CD4-positive, alpha-beta memory T cell (primary cell): ENCODE measurements at regions of chr7 and their contacts with region 1.

Region 1: DNA sequence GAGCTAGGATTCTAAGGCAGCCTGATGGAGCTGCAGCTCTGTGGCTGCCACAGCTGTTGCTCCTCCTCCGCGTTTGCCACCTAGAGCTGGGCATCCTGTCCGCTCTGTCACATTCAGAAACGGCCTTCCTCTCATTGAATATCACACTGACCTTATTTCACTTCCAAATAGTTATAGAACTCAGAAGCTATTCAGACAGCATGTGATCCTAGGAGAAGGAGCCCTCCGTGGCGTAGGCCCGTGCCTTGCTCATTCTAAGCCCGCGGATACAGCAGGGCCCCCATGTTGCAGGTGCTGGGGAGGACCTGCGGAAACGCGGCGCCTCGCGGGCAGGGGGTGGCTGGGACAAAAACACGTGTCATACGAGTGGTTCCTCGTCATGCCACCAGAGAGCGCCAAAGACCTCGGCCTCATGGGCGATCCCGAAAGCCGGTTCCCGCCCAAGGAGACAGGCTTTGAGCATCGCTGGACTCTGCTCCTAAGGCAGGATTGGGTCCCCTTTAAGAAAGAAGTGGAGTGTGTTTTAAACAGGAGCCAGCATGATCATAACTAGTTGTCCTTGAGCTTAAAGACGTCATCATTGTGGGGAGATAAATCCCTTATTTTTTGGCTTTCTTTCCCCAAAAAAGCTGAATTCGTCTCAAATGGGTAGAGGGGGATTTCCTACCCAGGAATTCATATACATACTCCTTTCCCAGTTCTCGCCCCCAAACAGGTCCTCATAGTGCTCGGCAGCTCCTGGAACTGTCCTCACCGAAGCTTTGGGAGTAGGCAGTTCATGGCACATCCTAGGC is 17.9 kb upstream of the FIGNL1 start:
- DNase-seq: peak; percentile 72 to 78 (median 74)
- H3K4me3 ChIP-seq: peak overlapping the region in 1 of 2 donors; percentile 6
- H3K4me3 Mint-ChIP-seq: peak overlapping the region; percentile 18 to 79 (median 64)
- H3K27ac ChIP-seq: no peak overlapping the region
- H3K27ac Mint-ChIP-seq: peak overlapping the region in 5 of 7 donors; percentile 55 to 88 (median 81)
- H3K4me1 ChIP-seq: peaks cover 10% of the 10 kb centered on the region
- H3K4me1 Mint-ChIP-seq: peaks cover 2 to 14% (median 9%) of the 10 kb centered on the region in 4 donors
- H3K27me3 ChIP-seq: no peaks in the 10 kb centered on the region
- H3K27me3 Mint-ChIP-seq: peaks cover 0 to 3% of the 10 kb centered on the region in 2 donors

Region 2: DNA sequence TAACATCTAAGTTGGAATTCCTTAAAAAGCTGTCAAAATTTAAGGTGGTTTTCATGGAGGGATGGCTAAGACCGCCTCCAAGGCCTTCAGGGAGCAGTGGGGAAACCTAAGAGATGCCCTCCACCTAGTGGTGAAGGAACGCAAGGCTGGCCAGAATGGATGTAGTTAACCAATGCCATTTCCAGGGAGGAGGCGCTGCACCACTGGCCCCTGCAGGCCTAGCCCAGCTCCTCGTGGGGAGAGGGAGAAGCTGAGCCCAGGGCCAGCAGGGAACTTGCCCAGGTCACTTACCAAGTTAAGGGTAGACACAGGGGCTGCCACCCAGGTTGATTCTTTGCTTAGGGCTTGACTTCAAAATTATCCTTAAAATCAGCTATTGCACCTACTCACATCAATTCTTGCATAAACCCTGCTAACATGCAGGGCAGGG is 49.9 kb before region 1 on chr7:
- CTCF ChIA-PET with region 1: interaction called, 13 read pairs
- POLR2A ChIA-PET with region 1: no interaction called
- intact Hi-C with region 1: no loop called
- DNase-seq: peak; percentile 59 to 71 (median 63)
- H3K4me3 ChIP-seq: no peak overlapping the region
- H3K4me3 Mint-ChIP-seq: no peak overlapping the region
- H3K27ac ChIP-seq: no peak overlapping the region
- H3K27ac Mint-ChIP-seq: peak overlapping the region in 1 of 7 donors; percentile 62
- H3K4me1 ChIP-seq: peaks cover 16% of the 10 kb centered on the region
- H3K4me1 Mint-ChIP-seq: peaks cover 12 to 23% (median 16%) of the 10 kb centered on the region in 4 donors
- H3K27me3 ChIP-seq: no peaks in the 10 kb centered on the region
- H3K27me3 Mint-ChIP-seq: no peaks in the 10 kb centered on the region

Region 3: DNA sequence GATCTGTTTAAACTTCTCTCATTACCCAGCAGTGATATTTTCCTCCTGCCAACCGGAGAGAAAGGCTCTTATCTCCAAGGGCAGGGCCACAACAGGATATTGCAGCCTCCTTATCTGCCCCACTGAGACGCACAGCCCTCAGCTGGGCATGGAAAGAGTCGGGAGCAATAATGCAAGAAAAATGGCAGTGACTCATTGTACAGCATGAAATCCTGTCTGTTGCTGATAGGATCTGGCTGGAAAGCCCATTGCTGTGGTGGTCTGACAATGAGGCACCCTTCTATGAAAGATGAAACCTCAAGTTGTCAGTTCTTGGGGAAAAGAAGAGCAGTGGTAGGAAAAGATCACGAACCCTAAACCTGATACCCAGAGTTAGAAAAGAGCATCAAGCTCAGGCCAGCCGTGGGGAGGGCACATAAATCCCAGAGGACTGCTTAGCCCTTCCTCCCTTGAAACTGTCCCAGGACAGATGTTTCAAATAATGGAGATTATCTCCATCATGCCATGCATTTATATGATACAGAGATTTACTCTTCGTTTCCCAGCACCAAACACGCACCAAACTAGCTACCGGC is 29.1 kb after region 1 on chr7:
- CTCF ChIA-PET with region 1: interaction called, 10 read pairs
- POLR2A ChIA-PET with region 1: no interaction called
- intact Hi-C with region 1: no loop called
- DNase-seq: no peak
- H3K4me3 ChIP-seq: no peak overlapping the region
- H3K4me3 Mint-ChIP-seq: no peak overlapping the region
- H3K27ac ChIP-seq: no peak overlapping the region
- H3K27ac Mint-ChIP-seq: no peak overlapping the region
- H3K4me1 ChIP-seq: no peaks in the 10 kb centered on the region
- H3K4me1 Mint-ChIP-seq: no peaks in the 10 kb centered on the region
- H3K27me3 ChIP-seq: no peaks in the 10 kb centered on the region
- H3K27me3 Mint-ChIP-seq: peaks cover 10 to 19% of the 10 kb centered on the region in 2 donors

Region 4: DNA sequence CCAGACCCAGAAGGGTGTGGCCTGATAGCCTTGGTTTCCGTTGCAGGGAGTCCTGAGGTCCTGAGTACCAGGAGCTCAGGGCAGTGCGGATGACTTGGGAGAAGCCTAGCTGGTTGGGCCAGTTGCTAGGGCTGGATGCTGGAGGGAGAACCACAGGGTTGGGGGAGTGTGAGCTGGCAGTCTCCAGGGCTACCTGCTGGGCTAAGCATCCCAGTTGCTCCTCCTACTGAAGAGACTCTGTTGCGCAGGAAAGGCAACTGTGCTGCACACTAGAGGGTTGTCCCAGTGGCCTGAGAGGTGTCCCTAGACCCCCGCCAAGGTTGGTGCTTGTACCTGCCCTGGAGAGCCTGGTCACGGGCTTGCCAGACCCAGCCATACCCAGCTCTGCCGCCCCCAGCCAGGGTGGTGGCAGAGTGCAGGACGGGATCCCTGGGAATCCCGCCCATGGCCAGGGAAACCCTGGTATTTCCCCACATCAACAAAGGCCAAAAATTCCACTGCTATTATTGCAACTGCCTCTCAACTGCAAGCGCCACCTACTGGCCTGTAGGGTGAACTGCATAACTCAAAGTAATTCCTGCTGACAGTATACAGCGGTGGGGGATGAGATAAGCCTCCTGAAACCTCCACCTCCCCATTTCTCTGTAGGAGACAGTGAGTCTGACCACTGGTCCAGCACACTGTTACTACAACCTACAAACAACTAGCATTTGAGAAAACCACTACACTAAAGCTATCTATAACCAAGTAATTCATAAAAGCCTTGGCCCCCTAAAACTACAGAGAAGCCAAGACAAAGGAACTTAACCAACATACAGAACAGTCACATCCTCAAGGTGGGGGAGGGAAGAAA is 164.8 kb after region 1 on chr7:
- CTCF ChIA-PET with region 1: interaction called, 135 read pairs
- POLR2A ChIA-PET with region 1: interaction called, 3 read pairs
- intact Hi-C with region 1: loop called (anchors 1 kb)
- DNase-seq: peak; percentile 57 to 62 (median 60)
- H3K4me3 ChIP-seq: no peak overlapping the region
- H3K4me3 Mint-ChIP-seq: no peak overlapping the region
- H3K27ac ChIP-seq: no peak overlapping the region
- H3K27ac Mint-ChIP-seq: peak overlapping the region in 1 of 7 donors; percentile 15
- H3K4me1 ChIP-seq: no peaks in the 10 kb centered on the region
- H3K4me1 Mint-ChIP-seq: peaks cover 3 to 6% (median 5%) of the 10 kb centered on the region in 4 donors
- H3K27me3 ChIP-seq: no peaks in the 10 kb centered on the region
- H3K27me3 Mint-ChIP-seq: peaks cover 3 to 5% of the 10 kb centered on the region in 2 donors

Region 5: DNA sequence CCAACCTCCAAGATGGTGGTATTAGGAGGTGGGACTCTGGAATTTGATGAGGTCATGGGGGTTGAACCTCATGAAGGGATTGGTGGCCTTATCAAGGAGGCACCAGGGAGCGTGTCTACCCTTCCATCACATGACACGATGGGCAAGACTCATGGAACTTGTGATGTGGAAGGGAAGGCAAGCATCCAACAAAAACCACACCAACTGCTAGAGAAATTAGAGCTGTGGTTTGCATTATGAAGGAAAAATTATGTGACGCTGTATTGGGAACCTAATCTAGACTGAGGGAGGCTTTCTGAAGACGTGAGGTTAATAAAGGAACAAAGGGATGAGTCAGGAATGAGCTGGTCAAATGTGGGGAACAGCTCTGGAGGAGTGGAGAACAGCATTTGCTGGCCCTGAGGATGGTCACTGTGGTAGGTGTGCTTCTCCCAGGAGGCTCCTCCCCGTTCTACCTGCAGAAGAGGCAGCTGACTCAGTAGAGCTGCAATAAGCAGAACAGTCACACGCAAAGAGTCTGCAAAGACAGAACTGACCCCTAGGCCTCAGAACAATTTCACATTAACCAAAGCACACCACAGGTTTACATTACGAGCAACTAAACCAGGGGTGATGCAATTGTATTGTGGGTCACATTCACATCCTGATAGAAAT is 551.3 kb after region 1 on chr7:
- CTCF ChIA-PET with region 1: no interaction called
- POLR2A ChIA-PET with region 1: no interaction called
- intact Hi-C with region 1: no loop called
- DNase-seq: no peak
- H3K4me3 ChIP-seq: no peak overlapping the region
- H3K4me3 Mint-ChIP-seq: no peak overlapping the region
- H3K27ac ChIP-seq: no peak overlapping the region
- H3K27ac Mint-ChIP-seq: no peak overlapping the region
- H3K4me1 ChIP-seq: no peaks in the 10 kb centered on the region
- H3K4me1 Mint-ChIP-seq: peaks cover 0 to 8% (median 3%) of the 10 kb centered on the region in 4 donors
- H3K27me3 ChIP-seq: no peaks in the 10 kb centered on the region
- H3K27me3 Mint-ChIP-seq: no peaks in the 10 kb centered on the region

Region 6: DNA sequence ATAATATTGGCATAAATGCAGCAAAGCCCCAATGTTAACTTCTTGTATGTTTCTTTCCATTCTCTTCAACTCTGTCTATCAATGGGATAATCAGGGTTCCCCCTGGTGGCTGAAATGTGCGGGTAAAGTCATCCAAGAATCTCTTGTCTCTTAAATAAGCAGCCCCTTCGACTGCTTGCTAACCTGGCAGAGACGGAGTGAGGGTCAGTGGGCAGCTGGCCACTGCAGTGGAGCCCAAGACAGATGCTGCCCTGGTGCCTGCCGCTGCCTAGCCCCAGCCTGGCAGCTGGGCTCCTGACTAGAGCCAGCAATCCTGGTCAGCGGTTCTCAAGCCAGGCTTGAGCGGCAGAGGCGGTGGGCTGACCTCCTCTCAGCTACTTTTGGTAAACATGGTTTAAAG is 599.7 kb after region 1 on chr7:
- CTCF ChIA-PET with region 1: interaction called, 8 read pairs
- POLR2A ChIA-PET with region 1: no interaction called
- intact Hi-C with region 1: loop called (anchors 2 kb)
- DNase-seq: peak; percentile 19 to 41 (median 28)
- H3K4me3 ChIP-seq: no peak overlapping the region
- H3K4me3 Mint-ChIP-seq: no peak overlapping the region
- H3K27ac ChIP-seq: no peak overlapping the region
- H3K27ac Mint-ChIP-seq: no peak overlapping the region
- H3K4me1 ChIP-seq: no peaks in the 10 kb centered on the region
- H3K4me1 Mint-ChIP-seq: peaks cover 0 to 5% (median under 1%) of the 10 kb centered on the region in 4 donors
- H3K27me3 ChIP-seq: no peaks in the 10 kb centered on the region
- H3K27me3 Mint-ChIP-seq: peaks cover 1 to 2% of the 10 kb centered on the region in 2 donors